H1 (cell line): ENCODE measurements at regions of chr17 and their contacts with region 1.

Region 1: GRCh38 chr17:3913531-3914311 is 2.5 kb downstream of the P2RX1 start:
- DNase-seq: peak; percentile 58 to 95
- H3K4me3 ChIP-seq: no peak overlapping the region
- H3K27ac ChIP-seq: no peak overlapping the region
- H3K4me1 ChIP-seq: peaks cover 0 to 1% (median 0%) of the 10 kb centered on the region in 4 experiments; a peak in 1 of 7 replicates
- H3K27me3 ChIP-seq: no peaks in the 10 kb centered on the region
- CTCF ChIP-seq: peak; percentile 97 to 99 (median 99)
- EP300 ChIP-seq: no peak
- POLR2A ChIP-seq: no peak
- RAD21 ChIP-seq: peak; percentile 93 to 94

Region 2: GRCh38 chr17:3865176-3865575 is 48.5 kb before region 1 on chr17:
- CTCF ChIA-PET with region 1: interaction called, 131 read pairs
- POLR2A ChIA-PET with region 1: no interaction called
- DNase-seq: no peak
- H3K4me3 ChIP-seq: no peak overlapping the region
- H3K27ac ChIP-seq: no peak overlapping the region
- H3K4me1 ChIP-seq: no peaks in the 10 kb centered on the region
- H3K27me3 ChIP-seq: no peaks in the 10 kb centered on the region
- CTCF ChIP-seq: no peak
- EP300 ChIP-seq: no peak
- POLR2A ChIP-seq: no peak
- RAD21 ChIP-seq: no peak

Region 3: GRCh38 chr17:3924512-3925268 is 11.0 kb after region 1 on chr17:
- CTCF ChIA-PET with region 1: interaction called, 42 read pairs
- POLR2A ChIA-PET with region 1: no interaction called
- DNase-seq: no peak
- H3K4me3 ChIP-seq: no peak overlapping the region
- H3K27ac ChIP-seq: no peak overlapping the region
- H3K4me1 ChIP-seq: peaks cover 0 to 3% (median 0%) of the 10 kb centered on the region in 4 experiments; a peak in 3 of 7 replicates
- H3K27me3 ChIP-seq: no peaks in the 10 kb centered on the region
- CTCF ChIP-seq: no peak
- EP300 ChIP-seq: no peak
- POLR2A ChIP-seq: no peak
- RAD21 ChIP-seq: no peak

Region 4: DNA sequence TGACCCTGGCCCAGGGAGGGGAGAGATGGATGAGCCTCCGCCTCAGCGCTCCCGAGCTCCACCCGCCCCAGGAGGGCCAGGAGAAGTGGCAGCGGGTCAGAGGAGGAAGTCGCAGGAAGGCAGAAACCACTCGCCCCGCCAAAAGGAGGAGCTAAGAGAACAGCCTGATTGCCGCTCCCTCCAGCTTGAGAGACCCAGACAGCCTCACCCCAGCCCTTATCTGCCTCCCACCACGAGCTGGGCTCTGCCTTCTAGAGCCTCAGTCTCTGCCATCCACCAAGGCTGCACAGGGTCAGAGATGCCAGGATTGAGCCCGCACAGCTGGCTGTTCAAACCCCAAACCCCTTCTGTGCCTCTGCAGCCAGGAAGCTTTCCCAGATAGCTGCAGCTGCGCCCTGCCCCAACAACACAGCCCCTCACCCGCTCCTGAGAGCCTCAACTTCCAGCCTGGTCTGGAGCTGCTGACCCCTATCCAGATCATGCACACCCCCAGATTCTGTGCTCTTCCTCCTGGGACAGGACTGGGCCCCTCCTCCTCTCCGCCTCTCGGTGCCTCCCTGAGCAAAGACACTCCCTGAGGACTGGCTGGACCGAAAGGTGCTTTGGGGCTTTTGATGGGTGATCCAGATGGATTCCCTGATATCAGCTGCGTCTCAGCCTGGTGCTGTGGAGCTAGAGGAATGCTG is 51.5 kb after region 1 on chr17:
- CTCF ChIA-PET with region 1: interaction called, 11 read pairs
- POLR2A ChIA-PET with region 1: interaction called, 3 read pairs
- DNase-seq: peak in 1 of 2 experiments; percentile 80
- H3K4me3 ChIP-seq: peak overlapping the region; percentile 22 to 80 (median 56)
- H3K27ac ChIP-seq: no peak overlapping the region
- H3K4me1 ChIP-seq: peaks cover 3 to 18% (median 10%) of the 10 kb centered on the region in 4 experiments
- H3K27me3 ChIP-seq: peaks cover 2 to 27% (median 15%) of the 10 kb centered on the region in 4 experiments; a peak in 6 of 7 replicates
- CTCF ChIP-seq: no peak
- EP300 ChIP-seq: no peak
- POLR2A ChIP-seq: no peak
- RAD21 ChIP-seq: peak in 1 of 2 experiments; percentile 20; a peak in 1 of 4 replicates

Region 5: GRCh38 chr17:4040784-4041183 is 127.1 kb after region 1 on chr17:
- CTCF ChIA-PET with region 1: interaction called, 10 read pairs
- POLR2A ChIA-PET with region 1: no interaction called
- DNase-seq: no peak
- H3K4me3 ChIP-seq: no peak overlapping the region
- H3K27ac ChIP-seq: no peak overlapping the region
- H3K4me1 ChIP-seq: no peaks in the 10 kb centered on the region
- H3K27me3 ChIP-seq: no peaks in the 10 kb centered on the region
- CTCF ChIP-seq: no peak
- EP300 ChIP-seq: no peak
- POLR2A ChIP-seq: no peak
- RAD21 ChIP-seq: no peak